ENCODE measurements at regions of chr12 and their contacts with region 1.

Region 1: DNA sequence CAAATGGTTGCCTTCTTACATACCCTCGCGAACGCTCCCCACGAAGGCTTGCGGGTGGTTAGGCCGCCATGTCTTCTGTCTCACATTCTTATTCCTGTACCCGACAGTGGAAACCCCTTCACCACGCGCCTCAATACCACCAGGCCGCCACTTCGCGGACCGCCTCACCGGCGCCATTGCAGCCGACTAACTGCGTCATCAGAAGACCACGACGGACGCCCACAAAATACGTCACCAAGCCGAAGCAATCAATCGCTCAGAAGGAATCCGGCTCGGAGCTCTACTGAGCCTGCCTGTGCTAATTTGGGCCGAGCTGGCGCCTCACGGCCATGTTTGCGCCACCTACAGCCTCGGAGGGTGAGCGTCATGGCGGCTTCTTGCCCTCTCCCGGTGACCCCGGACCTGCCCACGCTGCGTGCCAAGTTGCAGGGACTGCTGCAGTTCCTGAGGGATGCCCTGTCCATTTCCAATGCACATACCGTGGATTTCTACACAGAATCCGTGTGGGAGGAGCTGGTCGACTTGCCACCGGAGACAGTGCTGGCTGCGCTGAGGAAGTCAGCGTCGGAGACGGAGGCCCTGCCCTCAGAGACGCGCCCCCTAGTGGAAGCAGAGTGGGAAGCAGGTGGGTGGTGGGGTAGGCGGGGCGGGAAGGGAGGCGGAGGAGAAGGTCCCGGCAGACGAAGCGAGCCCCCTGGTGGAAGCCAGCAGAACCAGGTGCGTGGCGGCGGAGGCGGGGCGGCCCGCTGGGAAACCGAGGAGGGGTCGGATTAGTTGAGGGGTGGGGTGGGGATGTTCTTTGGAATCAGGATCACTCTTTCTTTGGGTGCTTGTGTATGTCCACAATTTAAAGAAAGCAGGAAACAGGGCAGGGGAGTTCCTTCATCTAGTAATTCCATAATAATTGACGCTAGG is at the starts of genes CCDC59 and METTL25:
- DNase-seq: peak; percentile 98
- total RNA-seq, gene CCDC59: 25.8 to 26.1 TPM
- total RNA-seq, gene METTL25: 15.1 to 15.9 TPM

Region 2: GRCh38 chr12:81043979-81044740 is 1314.3 kb before region 1 on chr12:
- intact Hi-C with region 1: no loop called
- DNase-seq: no peak

Region 3: DNA sequence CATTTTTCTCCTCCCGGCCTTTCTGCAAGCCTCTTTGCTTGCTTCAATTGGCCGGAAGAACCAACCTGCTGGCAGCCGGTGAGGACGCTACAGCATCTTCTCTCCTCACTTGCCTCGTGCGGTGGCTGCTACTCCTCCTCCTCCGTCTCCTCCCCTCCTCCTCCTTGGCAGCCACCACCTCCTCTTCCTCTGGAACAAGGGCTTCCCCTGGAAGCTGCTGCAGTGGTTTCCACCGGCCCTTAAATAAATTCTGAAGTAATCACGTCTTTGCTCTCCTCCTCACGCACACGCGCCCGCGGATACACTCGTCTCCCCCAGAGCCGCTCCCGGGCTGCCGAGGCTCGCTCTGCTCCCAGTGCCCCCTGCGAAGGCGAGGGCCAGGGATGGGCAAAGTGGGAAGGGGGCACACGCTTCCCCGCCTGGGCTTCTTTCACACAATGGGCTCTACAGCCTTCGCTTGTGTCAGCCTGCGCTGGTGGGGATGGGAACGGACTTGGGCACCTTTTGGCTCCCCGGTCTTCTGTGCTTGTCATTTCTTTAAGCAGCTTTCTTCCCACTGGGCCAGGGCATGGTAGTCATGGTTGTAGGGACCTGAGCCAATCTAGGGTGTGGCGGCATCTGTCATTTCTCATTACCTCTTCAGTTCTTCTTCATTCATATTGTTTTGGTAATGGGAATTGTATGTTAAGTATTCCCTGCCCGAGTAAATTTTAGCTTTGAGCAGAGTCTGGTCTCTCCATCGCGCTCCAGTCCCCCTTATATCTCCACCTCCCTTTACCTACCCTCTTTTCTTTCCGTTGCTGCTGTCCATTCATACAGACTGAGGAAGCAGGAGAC is 599.0 kb before region 1 on chr12 and contains the start of gene PPFIA2:
- intact Hi-C with region 1: loop called in 1 of 2 experiments (anchors 10 kb)
- DNase-seq: peak; percentile 78
- total RNA-seq, gene PPFIA2: 22.6 to 62.6 TPM